Natural killer cell (primary cell): ENCODE measurements at regions of chr10 and their contacts with region 1.

Region 1: DNA sequence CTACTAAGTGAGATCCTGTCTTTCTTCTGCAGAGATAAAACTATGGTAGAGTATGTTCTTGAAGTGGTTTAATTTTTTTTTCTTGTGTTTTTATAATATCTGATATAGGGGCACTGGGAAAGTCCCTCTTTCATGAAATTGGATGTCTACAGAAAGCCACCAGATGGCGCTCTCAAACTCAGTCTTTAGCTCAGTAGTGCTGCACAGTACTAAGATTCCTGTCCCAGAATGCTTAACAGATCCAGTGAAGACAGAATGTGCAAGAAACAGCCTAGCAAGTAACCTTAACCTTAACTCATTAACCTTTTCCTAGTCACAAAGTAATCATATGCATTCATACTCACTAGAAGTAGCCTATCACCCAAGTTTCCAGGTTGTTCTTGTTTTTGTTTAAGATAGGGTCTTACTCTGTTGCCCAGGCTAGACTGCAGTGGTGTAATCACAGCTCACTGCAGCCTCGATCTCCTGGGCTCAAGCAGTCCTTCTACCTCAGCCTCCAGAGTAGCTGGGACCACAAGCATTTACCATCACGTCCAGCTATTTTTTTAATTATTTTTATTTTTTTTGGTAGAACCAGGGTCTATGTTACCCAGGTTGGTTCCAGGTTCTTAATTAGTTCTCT is 56.7 kb downstream of the IDE start:
- DNase-seq: peak; percentile 33 to 92
- ATAC-seq: peak; percentile 86 to 99 (median 95)
- H3K4me3 ChIP-seq: no peak overlapping the region
- H3K4me3 Mint-ChIP-seq: no peak overlapping the region
- H3K27ac ChIP-seq: no peak overlapping the region
- H3K27ac Mint-ChIP-seq: no peak overlapping the region
- H3K4me1 ChIP-seq: no peaks in the 10 kb centered on the region
- H3K4me1 Mint-ChIP-seq: peaks cover 0 to 5% of the 10 kb centered on the region in 2 donors
- H3K27me3 ChIP-seq: no peaks in the 10 kb centered on the region
- H3K27me3 Mint-ChIP-seq: no peaks in the 10 kb centered on the region
- CTCF ChIP-seq: peak; percentile 86

Region 2: DNA sequence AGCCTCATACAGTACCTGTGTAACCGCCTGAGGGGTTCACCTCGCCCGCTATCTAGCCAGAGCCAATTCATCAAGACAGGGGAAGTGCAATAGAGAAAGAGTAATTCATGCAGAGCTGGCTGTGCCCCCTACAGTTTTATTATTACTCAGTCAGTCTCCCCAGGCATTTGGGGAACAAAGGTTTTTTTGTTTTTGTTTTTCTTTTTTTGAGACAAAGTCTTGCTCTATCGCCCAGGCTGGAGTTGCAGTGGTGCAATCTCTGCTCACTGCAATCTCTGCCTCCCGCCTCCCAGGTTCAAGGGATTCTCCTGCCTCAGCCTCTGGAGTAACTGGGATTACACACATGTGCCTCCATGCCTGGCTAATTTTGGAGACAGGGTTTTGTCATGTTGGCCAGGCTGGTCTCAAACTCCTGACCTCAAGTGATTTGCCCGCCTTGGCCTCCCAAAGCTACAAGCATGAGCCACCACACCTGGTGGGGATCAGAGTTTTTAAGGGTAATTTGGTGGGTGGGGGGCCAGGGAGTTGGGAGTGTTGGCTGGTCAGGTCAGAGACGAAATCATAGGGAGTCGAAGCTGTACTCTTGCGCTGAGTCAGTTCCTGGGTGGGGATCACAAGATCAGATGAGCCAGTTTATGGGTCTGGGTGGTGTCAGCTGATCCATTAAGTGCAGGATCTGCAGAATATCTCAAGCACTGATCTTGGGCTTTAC is 109.7 kb before region 1 on chr10:
- intact Hi-C with region 1: no loop called
- DNase-seq: no peak
- ATAC-seq: no peak
- H3K4me3 ChIP-seq: no peak overlapping the region
- H3K4me3 Mint-ChIP-seq: no peak overlapping the region
- H3K27ac ChIP-seq: no peak overlapping the region
- H3K27ac Mint-ChIP-seq: no peak overlapping the region
- H3K4me1 ChIP-seq: no peaks in the 10 kb centered on the region
- H3K4me1 Mint-ChIP-seq: no peaks in the 10 kb centered on the region
- H3K27me3 ChIP-seq: no peaks in the 10 kb centered on the region
- H3K27me3 Mint-ChIP-seq: peaks cover 0 to 6% of the 10 kb centered on the region in 2 donors
- CTCF ChIP-seq: no peak

Region 3: GRCh38 chr10:92573798-92574547 is 56.8 kb after region 1 on chr10 and contains the start of gene IDE:
- intact Hi-C with region 1: loop called (anchors 1 kb)
- DNase-seq: peak; percentile 77 to 89
- ATAC-seq: peak; percentile 73 to 88 (median 80)
- H3K4me3 ChIP-seq: peak within 1 kb of the TSS; percentile 98
- H3K4me3 Mint-ChIP-seq: peak within 1 kb of the TSS; percentile 76
- H3K27ac ChIP-seq: peak within 1 kb of the TSS; percentile 90
- H3K27ac Mint-ChIP-seq: peak within 1 kb of the TSS; percentile 82 to 92
- H3K4me1 ChIP-seq: peaks cover 11% of the 10 kb centered on the region
- H3K4me1 Mint-ChIP-seq: peaks cover 24 to 33% of the 10 kb centered on the region in 2 donors
- H3K27me3 ChIP-seq: no peaks in the 10 kb centered on the region
- H3K27me3 Mint-ChIP-seq: no peaks in the 10 kb centered on the region
- CTCF ChIP-seq: peak; percentile 72
- total RNA-seq, gene IDE: 18.2 to 23.5 (median 21.8) TPM

Region 4: GRCh38 chr10:92644921-92645320 is 127.8 kb after region 1 on chr10:
- intact Hi-C with region 1: loop called (anchors 1 kb)
- DNase-seq: no peak
- ATAC-seq: no peak
- H3K4me3 ChIP-seq: no peak overlapping the region
- H3K4me3 Mint-ChIP-seq: no peak overlapping the region
- H3K27ac ChIP-seq: no peak overlapping the region
- H3K27ac Mint-ChIP-seq: no peak overlapping the region
- H3K4me1 ChIP-seq: no peaks in the 10 kb centered on the region
- H3K4me1 Mint-ChIP-seq: peaks cover 0 to 4% of the 10 kb centered on the region in 2 donors
- H3K27me3 ChIP-seq: no peaks in the 10 kb centered on the region
- H3K27me3 Mint-ChIP-seq: no peaks in the 10 kb centered on the region
- CTCF ChIP-seq: no peak

Region 5: DNA sequence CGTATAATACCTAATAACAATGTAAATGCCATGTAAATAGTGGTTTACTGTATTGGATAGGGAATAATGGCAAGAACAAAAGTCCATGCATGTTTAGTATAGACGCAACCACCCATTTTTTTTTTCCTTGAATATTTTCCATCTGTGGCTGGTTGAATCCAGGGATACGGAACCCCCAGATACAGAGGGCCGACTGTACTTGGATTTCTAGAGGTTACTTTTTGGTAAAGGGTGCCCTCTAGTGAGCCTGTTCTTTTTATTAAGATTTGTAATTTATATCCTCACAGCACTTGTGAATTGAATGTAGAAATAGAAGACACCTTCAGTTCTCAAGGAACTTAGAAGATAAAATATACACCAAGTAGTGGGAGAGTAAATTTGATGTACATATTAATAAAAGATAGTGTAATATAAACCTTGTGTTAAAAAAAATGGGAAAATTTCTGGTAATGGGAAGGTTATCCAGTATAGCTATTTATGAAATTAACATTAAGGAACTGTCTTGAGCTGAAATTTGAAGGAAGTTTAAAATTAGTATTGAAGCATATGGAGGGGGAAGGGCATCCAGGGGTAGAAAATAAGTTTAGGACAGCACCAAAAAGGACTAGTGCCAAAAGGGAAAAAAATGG is 363.2 kb after region 1 on chr10:
- intact Hi-C with region 1: loop called (anchors 1 kb)
- DNase-seq: peak in 1 of 2 donors; percentile 58
- ATAC-seq: peak in 2 of 3 donors; percentile 34 to 57
- H3K4me3 ChIP-seq: no peak overlapping the region
- H3K4me3 Mint-ChIP-seq: no peak overlapping the region
- H3K27ac ChIP-seq: no peak overlapping the region
- H3K27ac Mint-ChIP-seq: no peak overlapping the region
- H3K4me1 ChIP-seq: no peaks in the 10 kb centered on the region
- H3K4me1 Mint-ChIP-seq: peaks cover 23% of the 10 kb centered on the region in 2 donors
- H3K27me3 ChIP-seq: no peaks in the 10 kb centered on the region
- H3K27me3 Mint-ChIP-seq: no peaks in the 10 kb centered on the region
- CTCF ChIP-seq: peak; percentile 45